Caco-2 (cell line): ENCODE measurements at regions of chr20 and their contacts with region 1.

Region 1: GRCh38 chr20:36605399-36606157 is at the start of gene RAB5IF:
- DNase-seq: peak; percentile 100
- H3K4me3 ChIP-seq: peak within 1 kb of the TSS; percentile 85
- H3K4me3 Mint-ChIP-seq: peak within 1 kb of the TSS; percentile 91
- H3K27ac Mint-ChIP-seq: peak within 1 kb of the TSS; percentile 89
- H3K4me1 ChIP-seq: peaks cover 19% of the 10 kb centered on the region
- H3K4me1 Mint-ChIP-seq: peaks cover 17% of the 10 kb centered on the region
- H3K27me3 ChIP-seq: no peaks in the 10 kb centered on the region
- H3K27me3 Mint-ChIP-seq: no peaks in the 10 kb centered on the region
- CTCF ChIP-seq: peak; percentile 98 to 99
- total RNA-seq, gene RAB5IF: 279 and 282 TPM in 2 replicates

Region 2: GRCh38 chr20:36541227-36541763 is 64.3 kb before region 1 on chr20 and contains the start of gene MYL9:
- CTCF ChIA-PET with region 1: interaction called, 11 read pairs
- POLR2A ChIA-PET with region 1: interaction called, 7 read pairs
- intact Hi-C with region 1: no loop called
- DNase-seq: peak; percentile 97
- H3K4me3 ChIP-seq: peak within 1 kb of the TSS; percentile 68
- H3K4me3 Mint-ChIP-seq: peak within 1 kb of the TSS; percentile 85
- H3K27ac Mint-ChIP-seq: peak within 1 kb of the TSS; percentile 78
- H3K4me1 ChIP-seq: peaks cover 24% of the 10 kb centered on the region
- H3K4me1 Mint-ChIP-seq: peaks cover 22% of the 10 kb centered on the region
- H3K27me3 ChIP-seq: no peaks in the 10 kb centered on the region
- H3K27me3 Mint-ChIP-seq: no peaks in the 10 kb centered on the region
- CTCF ChIP-seq: peak in 1 of 2 experiments; percentile 58
- total RNA-seq, gene MYL9: 382 and 446 TPM in 2 replicates

Region 3: GRCh38 chr20:36562724-36563123 is 42.9 kb before region 1 on chr20:
- CTCF ChIA-PET with region 1: interaction called, 12 read pairs
- POLR2A ChIA-PET with region 1: interaction called, 3 read pairs
- intact Hi-C with region 1: no loop called
- DNase-seq: no peak
- H3K4me3 ChIP-seq: no peak overlapping the region
- H3K4me3 Mint-ChIP-seq: no peak overlapping the region
- H3K27ac Mint-ChIP-seq: no peak overlapping the region
- H3K4me1 ChIP-seq: peaks cover 8% of the 10 kb centered on the region; the same call in 1 of the 2 replicates
- H3K4me1 Mint-ChIP-seq: peaks cover 7% of the 10 kb centered on the region
- H3K27me3 ChIP-seq: no peaks in the 10 kb centered on the region
- H3K27me3 Mint-ChIP-seq: no peaks in the 10 kb centered on the region
- CTCF ChIP-seq: no peak

Region 4: GRCh38 chr20:36591854-36592641 is 13.5 kb before region 1 on chr20:
- CTCF ChIA-PET with region 1: interaction called, 29 read pairs
- POLR2A ChIA-PET with region 1: interaction called, 10 read pairs
- intact Hi-C with region 1: no loop called
- DNase-seq: peak; percentile 74 to 75
- H3K4me3 ChIP-seq: no peak overlapping the region
- H3K4me3 Mint-ChIP-seq: no peak overlapping the region
- H3K27ac Mint-ChIP-seq: peak overlapping the region; percentile 8
- H3K4me1 ChIP-seq: no peaks in the 10 kb centered on the region
- H3K4me1 Mint-ChIP-seq: no peaks in the 10 kb centered on the region
- H3K27me3 ChIP-seq: no peaks in the 10 kb centered on the region
- H3K27me3 Mint-ChIP-seq: no peaks in the 10 kb centered on the region
- CTCF ChIP-seq: peak; percentile 75

Region 5: DNA sequence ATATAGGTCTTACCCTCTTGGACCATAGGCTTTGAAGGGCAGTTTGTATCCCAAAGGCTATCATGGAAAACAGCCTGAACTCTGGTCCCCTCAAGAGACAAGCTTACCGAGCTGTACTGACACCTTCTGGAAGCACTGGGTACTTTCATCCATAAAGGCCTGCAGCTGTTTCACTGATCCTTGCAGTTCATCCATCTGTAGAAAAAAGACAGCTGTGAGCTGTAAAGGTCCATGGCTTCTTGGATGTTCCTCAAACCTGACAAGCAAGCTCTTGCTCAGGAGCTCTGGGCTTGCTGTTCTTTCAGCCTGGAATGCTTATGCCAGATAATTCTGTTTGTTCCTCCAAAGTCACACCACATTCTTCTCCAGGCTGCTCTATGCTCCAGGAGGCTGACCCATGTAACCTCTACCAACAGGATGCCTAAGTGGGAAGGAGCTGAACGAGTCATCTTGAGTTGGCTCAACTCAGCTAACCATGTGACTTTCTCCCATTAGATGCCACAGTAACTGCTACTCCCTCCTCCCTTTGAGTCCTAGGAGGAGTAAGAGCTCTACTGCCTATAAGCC is 149.2 kb after region 1 on chr20:
- CTCF ChIA-PET with region 1: interaction called, 15 read pairs
- POLR2A ChIA-PET with region 1: interaction called, 3 read pairs
- intact Hi-C with region 1: loop called (anchors 2 kb)
- DNase-seq: peak; percentile 86 to 89
- H3K4me3 ChIP-seq: no peak overlapping the region
- H3K4me3 Mint-ChIP-seq: no peak overlapping the region
- H3K27ac Mint-ChIP-seq: peak overlapping the region; percentile 10
- H3K4me1 ChIP-seq: peaks cover 5% of the 10 kb centered on the region
- H3K4me1 Mint-ChIP-seq: peaks cover 12% of the 10 kb centered on the region
- H3K27me3 ChIP-seq: no peaks in the 10 kb centered on the region
- H3K27me3 Mint-ChIP-seq: no peaks in the 10 kb centered on the region
- CTCF ChIP-seq: peak; percentile 96 to 97